GM12878 (cell line): ENCODE measurements at regions of chr5 and their contacts with region 1.

Region 1: DNA sequence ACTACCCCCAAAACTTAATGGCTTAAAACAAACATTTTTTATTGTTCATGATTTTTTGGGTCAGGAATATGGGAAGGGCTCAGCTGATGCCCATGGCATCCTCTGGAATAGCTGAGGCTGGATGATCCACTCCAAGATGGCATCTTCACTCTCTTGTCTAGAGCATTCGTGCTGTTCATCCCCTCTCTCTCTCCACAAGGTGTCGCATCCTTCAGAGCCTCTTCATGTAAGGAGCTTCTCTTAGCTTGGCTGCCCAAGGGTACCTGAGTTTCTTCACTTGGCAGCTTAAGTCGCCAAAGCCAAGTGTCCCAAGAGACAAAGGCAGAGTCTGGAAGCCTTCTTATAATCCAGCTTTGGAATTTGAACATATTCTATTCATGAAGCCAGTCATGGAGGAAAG is 294.7 kb downstream of the CHSY3 start:
- DNase-seq: no peak
- ATAC-seq: peak; percentile 89
- H3K4me3 ChIP-seq: no peak overlapping the region
- H3K27ac ChIP-seq: no peak overlapping the region
- H3K4me1 ChIP-seq: no peaks in the 10 kb centered on the region
- H3K27me3 ChIP-seq: no peaks in the 10 kb centered on the region
- CTCF ChIP-seq: peak; percentile 35 to 62 (median 42); a peak in 5 of 6 replicates
- EP300 ChIP-seq: no peak
- POLR2A ChIP-seq: no peak
- RAD21 ChIP-seq: peak; percentile 47

Region 2: GRCh38 chr5:130102375-130102774 is 96.5 kb before region 1 on chr5:
- CTCF ChIA-PET with region 1: no interaction called
- POLR2A ChIA-PET with region 1: no interaction called
- RAD21 ChIA-PET with region 1: no interaction called
- SMC1A ChIA-PET with region 1: no interaction called
- in situ Hi-C with region 1: no loop called
- intact Hi-C with region 1: no loop called
- DNase-seq: no peak
- ATAC-seq: peak; percentile 70
- H3K4me3 ChIP-seq: no peak overlapping the region
- H3K27ac ChIP-seq: no peak overlapping the region
- H3K4me1 ChIP-seq: no peaks in the 10 kb centered on the region
- H3K27me3 ChIP-seq: no peaks in the 10 kb centered on the region
- CTCF ChIP-seq: no peak
- EP300 ChIP-seq: no peak
- POLR2A ChIP-seq: no peak
- RAD21 ChIP-seq: no peak

Region 3: DNA sequence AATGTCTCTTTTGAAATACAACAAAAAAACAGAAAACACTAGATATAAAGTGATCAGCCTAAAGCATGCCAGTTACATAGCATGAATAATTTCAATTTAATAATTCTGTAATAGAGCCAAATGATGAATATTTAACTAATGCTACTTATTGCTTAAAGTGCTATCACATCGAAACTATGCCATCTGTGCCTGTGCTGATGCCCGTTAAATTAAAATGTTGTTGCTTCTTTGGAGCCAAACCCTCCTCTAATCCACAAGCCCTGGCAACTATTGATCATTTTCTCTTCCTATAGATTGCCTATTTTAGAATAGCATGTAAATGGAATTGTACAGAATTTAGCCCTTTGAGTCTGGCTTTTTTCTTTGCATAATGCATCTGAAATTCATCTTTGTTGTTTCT is 61.6 kb after region 1 on chr5:
- CTCF ChIA-PET with region 1: no interaction called
- POLR2A ChIA-PET with region 1: no interaction called
- RAD21 ChIA-PET with region 1: no interaction called
- SMC1A ChIA-PET with region 1: no interaction called
- in situ Hi-C with region 1: no loop called
- intact Hi-C with region 1: no loop called
- DNase-seq: no peak
- ATAC-seq: no peak
- H3K4me3 ChIP-seq: no peak overlapping the region
- H3K27ac ChIP-seq: no peak overlapping the region
- H3K4me1 ChIP-seq: no peaks in the 10 kb centered on the region
- H3K27me3 ChIP-seq: no peaks in the 10 kb centered on the region
- CTCF ChIP-seq: no peak
- EP300 ChIP-seq: no peak
- POLR2A ChIP-seq: no peak
- RAD21 ChIP-seq: no peak

Region 4: DNA sequence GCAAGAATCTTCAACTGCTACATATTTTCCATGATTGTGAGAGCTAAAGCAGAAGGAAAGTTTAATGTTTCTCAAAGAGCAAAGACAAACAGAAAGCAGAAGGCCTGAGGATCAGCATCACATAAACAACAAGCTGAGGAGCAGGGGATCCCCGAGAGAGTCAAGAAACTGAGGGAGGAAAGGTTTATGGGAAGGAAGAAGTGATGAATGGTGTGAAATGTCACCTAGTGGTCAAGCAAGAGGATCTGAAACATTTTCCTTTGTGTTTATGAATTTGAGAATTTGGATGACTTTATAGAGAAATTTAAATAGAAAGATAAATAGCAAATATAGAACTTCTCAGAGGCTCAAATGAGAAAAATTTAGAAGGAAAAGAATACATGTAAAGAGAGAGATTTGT is 187.2 kb after region 1 on chr5:
- CTCF ChIA-PET with region 1: interaction called, 11 read pairs
- POLR2A ChIA-PET with region 1: no interaction called
- RAD21 ChIA-PET with region 1: interaction called, 4 read pairs
- SMC1A ChIA-PET with region 1: interaction called, 3 read pairs
- in situ Hi-C with region 1: no loop called
- intact Hi-C with region 1: no loop called
- DNase-seq: no peak
- ATAC-seq: peak; percentile 47; the same call in 2 of the 3 replicates
- H3K4me3 ChIP-seq: no peak overlapping the region
- H3K27ac ChIP-seq: no peak overlapping the region
- H3K4me1 ChIP-seq: no peaks in the 10 kb centered on the region
- H3K27me3 ChIP-seq: no peaks in the 10 kb centered on the region
- CTCF ChIP-seq: no peak; a peak in 1 of 6 replicates
- EP300 ChIP-seq: no peak
- POLR2A ChIP-seq: no peak
- RAD21 ChIP-seq: no peak

Region 5: GRCh38 chr5:130710596-130710995 is 511.7 kb after region 1 on chr5:
- CTCF ChIA-PET with region 1: no interaction called
- POLR2A ChIA-PET with region 1: no interaction called
- RAD21 ChIA-PET with region 1: no interaction called
- SMC1A ChIA-PET with region 1: no interaction called
- in situ Hi-C with region 1: no loop called
- intact Hi-C with region 1: no loop called
- DNase-seq: no peak
- ATAC-seq: no peak
- H3K4me3 ChIP-seq: no peak overlapping the region
- H3K27ac ChIP-seq: no peak overlapping the region
- H3K4me1 ChIP-seq: no peaks in the 10 kb centered on the region
- H3K27me3 ChIP-seq: no peaks in the 10 kb centered on the region
- CTCF ChIP-seq: no peak
- EP300 ChIP-seq: no peak
- POLR2A ChIP-seq: no peak
- RAD21 ChIP-seq: no peak